GM10248 (cell line): ENCODE measurements at regions of chr7 and their contacts with region 1.

Region 1: GRCh38 chr7:139645572-139646523 is 122.4 kb downstream of the CLEC2L start:
- DNase-seq: peak; percentile 67
- CTCF ChIP-seq: peak; percentile 94

Region 2: GRCh38 chr7:139602143-139602722 is 43.6 kb before region 1 on chr7:
- CTCF ChIA-PET with region 1: interaction called, 14 read pairs
- POLR2A ChIA-PET with region 1: no interaction called
- DNase-seq: peak; percentile 41
- CTCF ChIP-seq: peak; percentile 47

Region 3: DNA sequence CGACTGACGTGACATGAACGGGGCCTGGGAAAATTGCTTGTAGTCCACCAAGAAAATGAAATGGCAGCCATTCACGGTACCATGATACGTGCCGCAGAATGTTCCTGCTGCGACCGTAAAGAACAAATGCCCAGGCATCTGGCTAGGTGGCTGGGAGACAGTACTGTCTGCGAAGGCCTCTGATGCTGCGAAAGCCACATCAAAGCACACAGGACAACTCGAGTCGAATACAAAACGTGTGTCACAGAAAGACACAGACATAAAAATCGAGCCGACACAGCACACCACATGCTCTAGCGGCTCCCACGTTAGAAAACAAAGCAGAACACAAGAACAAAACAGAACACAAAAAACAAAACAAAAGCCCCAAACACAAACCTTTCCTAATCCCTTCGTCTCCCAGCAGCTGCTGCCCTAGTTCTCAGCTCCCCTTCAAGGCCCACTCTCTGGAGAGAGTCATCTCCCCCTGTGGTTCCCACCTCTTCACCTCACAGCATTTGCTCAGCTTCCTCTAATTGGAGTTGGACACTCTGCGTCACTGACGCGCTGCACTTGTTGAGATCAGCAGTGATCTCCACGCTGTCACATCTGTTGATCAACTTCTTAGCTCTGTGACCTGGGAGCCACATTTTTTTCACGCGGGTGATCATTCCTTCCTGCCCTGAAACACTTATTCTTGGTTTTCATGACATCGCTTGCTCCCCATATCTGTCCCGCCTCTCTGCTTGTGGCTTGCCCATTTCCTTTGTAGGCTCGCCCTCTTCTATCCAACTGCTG is 10.1 kb before region 1 on chr7:
- CTCF ChIA-PET with region 1: interaction called, 49 read pairs
- POLR2A ChIA-PET with region 1: no interaction called
- DNase-seq: no peak
- CTCF ChIP-seq: no peak

Region 4: DNA sequence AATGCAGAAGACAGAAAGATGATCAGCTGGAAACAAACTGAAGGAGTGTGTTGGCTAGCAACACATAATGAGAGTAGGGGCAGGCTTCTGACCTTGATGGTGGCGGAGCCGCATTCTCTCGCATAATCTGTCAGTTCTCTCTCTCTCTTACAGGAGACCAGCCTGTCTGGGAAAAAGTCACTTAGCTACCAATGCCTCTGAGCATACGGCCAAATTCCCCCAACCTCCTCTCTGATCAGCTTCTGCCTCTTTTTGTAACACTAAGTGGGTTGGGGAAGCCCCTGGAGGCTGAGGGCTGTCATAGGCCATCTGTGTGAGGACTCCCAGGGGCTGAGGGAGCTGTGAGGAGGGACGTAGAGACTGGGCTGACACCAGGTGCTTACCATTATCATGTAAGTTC is 27.4 kb after region 1 on chr7:
- CTCF ChIA-PET with region 1: interaction called, 40 read pairs
- POLR2A ChIA-PET with region 1: interaction called, 4 read pairs
- DNase-seq: peak; percentile 75
- CTCF ChIP-seq: no peak

Region 5: DNA sequence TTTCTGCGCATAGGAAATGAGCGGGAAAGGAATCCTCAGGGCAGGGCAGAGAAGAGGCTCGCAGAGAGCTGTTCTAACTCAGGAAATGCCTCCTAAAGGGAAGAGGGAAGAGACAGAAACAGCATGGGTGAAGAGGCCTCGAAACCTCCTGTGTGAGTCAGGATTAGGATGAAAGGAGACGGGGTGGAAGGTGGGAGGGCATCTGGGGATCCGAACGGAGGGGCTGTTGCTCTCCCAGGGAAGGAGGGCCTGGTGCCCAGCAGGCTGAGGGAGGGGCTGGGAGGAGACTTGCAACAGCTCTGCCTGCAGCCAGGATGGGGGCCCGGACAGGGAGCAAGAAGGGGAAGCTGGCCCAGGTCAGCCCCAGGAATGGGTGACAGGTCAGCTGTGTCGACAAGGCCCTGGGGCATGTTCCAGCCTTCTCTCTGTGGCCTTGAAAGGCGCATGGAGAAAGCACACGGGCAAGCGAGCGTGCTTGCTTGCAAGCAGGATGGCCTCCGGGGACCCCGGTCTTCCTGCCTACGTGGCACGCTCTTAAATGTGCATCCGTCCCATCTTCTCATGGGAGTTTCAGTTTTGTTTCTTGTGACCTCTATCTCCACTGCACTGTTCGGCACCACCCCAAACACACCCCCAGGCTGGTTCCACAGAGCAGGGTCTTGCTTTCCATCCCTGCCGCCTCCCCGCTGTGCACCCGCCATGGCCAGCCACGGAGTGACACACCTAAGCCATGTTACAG is 68.5 kb after region 1 on chr7:
- CTCF ChIA-PET with region 1: interaction called, 20 read pairs
- POLR2A ChIA-PET with region 1: no interaction called
- DNase-seq: peak; percentile 84
- CTCF ChIP-seq: no peak

Region 6: DNA sequence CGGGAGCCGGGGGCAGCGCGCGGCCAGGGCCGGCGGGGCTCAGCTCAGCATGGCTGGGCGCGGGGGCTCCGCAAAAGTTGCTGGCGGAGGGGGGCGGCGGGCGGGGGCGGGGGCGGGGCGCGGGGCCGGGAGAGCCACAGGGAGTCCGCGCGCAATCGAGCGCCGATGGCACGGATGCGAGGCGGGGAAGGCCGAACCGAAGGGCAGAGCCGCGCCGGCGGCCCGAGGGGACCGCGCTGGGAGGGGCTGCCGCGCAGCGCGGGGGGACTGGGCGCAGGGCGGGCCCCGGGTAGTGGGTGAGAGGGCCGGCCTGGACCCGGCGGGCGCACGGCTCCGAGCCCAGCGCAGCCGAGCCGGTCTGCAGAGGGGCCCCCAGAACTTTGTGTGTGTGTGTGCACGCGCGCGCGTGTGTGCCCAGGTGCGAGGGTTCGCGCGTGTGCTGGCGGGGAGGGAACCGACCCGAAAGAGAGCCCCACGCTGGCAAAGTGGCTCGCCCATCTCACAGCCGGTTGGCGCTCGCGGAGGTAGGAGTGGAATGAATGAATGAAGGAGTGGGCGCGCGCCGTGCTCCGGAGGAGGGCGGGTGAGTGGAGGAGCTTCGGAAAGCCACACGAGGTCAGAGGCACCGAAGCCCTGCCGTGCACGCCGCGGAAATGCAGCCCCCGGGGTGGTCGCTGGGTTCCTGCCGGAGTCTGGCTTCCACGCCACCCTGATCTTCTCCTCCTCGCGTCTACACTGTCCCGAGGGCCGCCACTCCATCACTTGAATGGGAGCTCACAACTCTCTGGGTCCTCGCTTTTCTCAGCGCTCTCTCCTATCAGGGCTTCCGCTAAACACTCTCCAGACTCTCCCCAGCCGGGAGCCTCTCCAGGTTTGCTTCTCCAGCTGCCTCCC is 132.3 kb after region 1 on chr7 and contains the start of gene HIPK2:
- CTCF ChIA-PET with region 1: interaction called, 35 read pairs
- POLR2A ChIA-PET with region 1: no interaction called
- DNase-seq: peak; percentile 90
- CTCF ChIP-seq: no peak

Region 7: DNA sequence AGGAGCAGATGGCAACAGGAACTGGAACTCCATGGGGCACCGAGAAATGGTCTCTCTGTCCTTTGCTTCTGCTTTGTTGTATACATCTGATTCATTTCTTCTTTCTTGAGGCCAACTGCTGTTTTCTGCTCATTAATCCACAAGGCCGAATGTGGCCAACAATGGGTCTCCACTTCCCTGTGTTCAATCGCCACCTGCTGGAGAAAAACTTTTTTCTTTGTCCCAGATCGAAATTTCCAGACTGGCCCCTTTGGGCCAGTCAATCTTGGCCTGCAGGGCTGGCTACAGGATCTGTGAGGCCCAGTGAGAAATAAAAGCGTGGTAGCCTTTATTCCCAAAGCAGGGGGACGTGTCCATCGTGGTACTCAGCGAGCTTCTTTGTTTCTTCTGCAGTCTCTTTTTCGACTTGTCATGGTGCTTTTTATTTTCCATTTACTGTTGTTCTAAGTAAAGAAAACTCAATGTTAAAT is 358.1 kb after region 1 on chr7:
- CTCF ChIA-PET with region 1: interaction called, 125 read pairs
- POLR2A ChIA-PET with region 1: no interaction called
- DNase-seq: peak; percentile 73
- CTCF ChIP-seq: peak; percentile 32